AG04449 (cell line): ENCODE measurements at regions of chr7 and their contacts with region 1.

Region 1: DNA sequence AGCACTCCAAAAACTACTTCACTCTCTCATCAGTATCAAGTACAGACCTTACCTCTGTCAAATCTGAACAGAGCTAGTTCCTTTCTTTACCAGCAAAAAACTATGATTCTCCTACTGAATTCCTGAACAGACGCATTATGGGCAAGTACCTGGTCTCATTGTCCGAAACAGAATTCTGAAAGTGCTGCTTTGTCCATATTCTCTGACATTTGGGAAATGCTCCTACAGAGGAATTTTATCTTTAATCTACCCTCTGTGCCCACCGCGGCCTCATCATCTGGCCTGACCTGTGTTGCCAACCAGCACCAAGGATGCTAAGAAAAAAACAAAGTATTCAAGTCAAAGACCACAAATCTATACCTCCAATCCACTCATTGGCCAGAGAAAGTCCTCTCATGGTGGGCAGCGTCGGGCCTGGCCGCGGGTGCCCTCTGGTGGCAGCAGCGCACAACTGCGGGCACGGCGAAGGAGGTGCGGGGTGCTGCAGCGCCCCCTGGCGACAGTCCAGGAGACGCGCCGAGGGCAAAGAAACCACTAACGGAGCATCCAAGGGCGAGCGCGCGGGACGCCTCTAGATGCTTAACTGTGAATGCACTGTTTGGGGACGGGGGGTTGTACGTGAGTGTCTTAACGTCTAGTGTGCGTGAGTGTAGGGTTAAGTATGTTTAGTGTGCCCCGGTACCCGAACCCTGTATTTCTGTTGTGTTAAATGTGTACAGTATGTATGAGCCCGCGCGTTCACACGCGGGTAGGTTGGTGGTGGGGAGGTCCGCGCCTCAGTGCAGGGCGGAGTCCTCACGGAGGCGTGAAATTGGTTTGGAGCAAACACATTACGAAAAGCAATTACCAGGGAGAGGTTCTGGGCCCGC is 5.0 kb upstream of the GBX1 start:
- DNase-seq: no peak
- H3K4me3 ChIP-seq: no peak overlapping the region
- CTCF ChIP-seq: peak; percentile 100

Region 2: GRCh38 chr7:151123822-151124464 is 48.6 kb before region 1 on chr7:
- CTCF ChIA-PET with region 1: interaction called, 41 read pairs
- POLR2A ChIA-PET with region 1: no interaction called
- DNase-seq: no peak
- H3K4me3 ChIP-seq: no peak overlapping the region
- CTCF ChIP-seq: peak; percentile 100

Region 3: DNA sequence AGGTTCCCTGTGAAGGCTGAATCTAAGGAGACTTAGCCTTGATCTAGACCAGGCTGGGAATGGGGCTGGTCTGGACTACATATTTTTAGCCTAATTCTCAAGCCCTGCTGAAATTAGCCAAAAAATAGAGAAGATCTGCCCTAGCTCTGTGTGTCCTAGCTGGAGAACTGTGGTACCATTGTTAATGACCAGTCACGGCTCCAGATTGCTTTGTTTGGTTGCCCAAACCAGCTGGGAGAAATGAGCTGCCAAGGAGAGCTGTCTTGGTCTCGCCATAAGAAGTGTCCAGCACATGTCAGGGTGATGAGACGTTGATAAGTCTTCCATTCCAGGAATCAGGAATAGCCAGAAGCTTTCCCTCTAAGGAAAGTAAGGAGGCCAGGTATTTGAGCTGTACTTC is 25.7 kb before region 1 on chr7:
- CTCF ChIA-PET with region 1: interaction called, 32 read pairs
- POLR2A ChIA-PET with region 1: no interaction called
- DNase-seq: no peak
- H3K4me3 ChIP-seq: no peak overlapping the region
- CTCF ChIP-seq: no peak

Region 4: GRCh38 chr7:151157645-151158329 is 14.7 kb before region 1 on chr7:
- CTCF ChIA-PET with region 1: interaction called, 29 read pairs
- POLR2A ChIA-PET with region 1: no interaction called
- DNase-seq: no peak
- H3K4me3 ChIP-seq: no peak overlapping the region
- CTCF ChIP-seq: no peak